ENCODE measurements at regions of chr2 and their contacts with region 1.

Region 1: GRCh38 chr2:48617618-48618017 is at the start of gene GTF2A1L:
- DNase-seq: no peak
- H3K4me3 ChIP-seq: no peak within 1 kb of the TSS
- H3K27ac ChIP-seq: no peak within 1 kb of the TSS
- H3K4me1 ChIP-seq: no peaks in the 10 kb centered on the region
- H3K27me3 ChIP-seq: peaks cover 50% of the 10 kb centered on the region
- CTCF ChIP-seq: no peak
- total RNA-seq, gene GTF2A1L: not detected in 2 replicates

Region 2: DNA sequence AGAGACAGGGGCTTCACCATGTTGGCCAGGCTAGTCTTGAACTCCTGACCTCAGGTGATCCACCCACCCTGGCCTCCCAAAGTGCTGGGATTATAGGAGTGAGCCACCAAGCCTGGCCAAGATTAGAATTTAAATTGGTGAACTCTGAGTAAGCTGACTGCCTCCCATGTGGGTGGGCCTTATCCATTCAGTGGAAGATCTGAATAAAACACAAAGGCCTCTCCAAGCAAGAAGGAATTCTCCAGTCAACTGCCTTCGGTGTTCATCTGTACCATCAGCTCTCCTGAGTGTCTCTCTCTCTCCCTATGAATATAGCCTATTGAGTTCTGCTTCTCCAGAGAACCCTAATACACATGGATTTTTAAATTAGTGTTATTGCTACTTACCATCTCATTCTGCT is 747.8 kb before region 1 on chr2:
- CTCF ChIA-PET with region 1: no interaction called
- POLR2A ChIA-PET with region 1: no interaction called
- intact Hi-C with region 1: no loop called
- DNase-seq: no peak
- H3K4me3 ChIP-seq: no peak overlapping the region
- H3K27ac ChIP-seq: no peak overlapping the region
- H3K4me1 ChIP-seq: no peaks in the 10 kb centered on the region
- H3K27me3 ChIP-seq: no peaks in the 10 kb centered on the region
- CTCF ChIP-seq: no peak

Region 3: GRCh38 chr2:48589170-48589767 is 28.3 kb before region 1 on chr2:
- CTCF ChIA-PET with region 1: no interaction called
- POLR2A ChIA-PET with region 1: no interaction called
- intact Hi-C with region 1: no loop called
- DNase-seq: peak in 1 of 2 experiments; percentile 43
- H3K4me3 ChIP-seq: no peak overlapping the region
- H3K27ac ChIP-seq: no peak overlapping the region
- H3K4me1 ChIP-seq: no peaks in the 10 kb centered on the region
- H3K27me3 ChIP-seq: no peaks in the 10 kb centered on the region
- CTCF ChIP-seq: peak; percentile 95

Region 4: GRCh38 chr2:48727565-48727964 is 109.9 kb after region 1 on chr2:
- CTCF ChIA-PET with region 1: no interaction called
- POLR2A ChIA-PET with region 1: interaction called, 11 read pairs
- intact Hi-C with region 1: loop called (anchors 2 kb)
- DNase-seq: no peak
- H3K4me3 ChIP-seq: no peak overlapping the region
- H3K27ac ChIP-seq: no peak overlapping the region
- H3K4me1 ChIP-seq: no peaks in the 10 kb centered on the region
- H3K27me3 ChIP-seq: no peaks in the 10 kb centered on the region
- CTCF ChIP-seq: peak; percentile 48; the same call in 1 of the 2 replicates